Head of caudate nucleus (tissue), 42 donors: ENCODE measurements at regions of chr7 and their contacts with region 1.

Region 1: GRCh38 chr7:30504347-30505173 is at the start of gene GGCT:
- DNase-seq: peak; percentile 97 to 100 (median 99)

Region 2: GRCh38 chr7:30164567-30164966 is 340.0 kb before region 1 on chr7:
- intact Hi-C with region 1: loop called (anchors 10 kb)
- DNase-seq: peak in 17 of 42 donors; percentile 30 to 76 (median 51)

Region 3: DNA sequence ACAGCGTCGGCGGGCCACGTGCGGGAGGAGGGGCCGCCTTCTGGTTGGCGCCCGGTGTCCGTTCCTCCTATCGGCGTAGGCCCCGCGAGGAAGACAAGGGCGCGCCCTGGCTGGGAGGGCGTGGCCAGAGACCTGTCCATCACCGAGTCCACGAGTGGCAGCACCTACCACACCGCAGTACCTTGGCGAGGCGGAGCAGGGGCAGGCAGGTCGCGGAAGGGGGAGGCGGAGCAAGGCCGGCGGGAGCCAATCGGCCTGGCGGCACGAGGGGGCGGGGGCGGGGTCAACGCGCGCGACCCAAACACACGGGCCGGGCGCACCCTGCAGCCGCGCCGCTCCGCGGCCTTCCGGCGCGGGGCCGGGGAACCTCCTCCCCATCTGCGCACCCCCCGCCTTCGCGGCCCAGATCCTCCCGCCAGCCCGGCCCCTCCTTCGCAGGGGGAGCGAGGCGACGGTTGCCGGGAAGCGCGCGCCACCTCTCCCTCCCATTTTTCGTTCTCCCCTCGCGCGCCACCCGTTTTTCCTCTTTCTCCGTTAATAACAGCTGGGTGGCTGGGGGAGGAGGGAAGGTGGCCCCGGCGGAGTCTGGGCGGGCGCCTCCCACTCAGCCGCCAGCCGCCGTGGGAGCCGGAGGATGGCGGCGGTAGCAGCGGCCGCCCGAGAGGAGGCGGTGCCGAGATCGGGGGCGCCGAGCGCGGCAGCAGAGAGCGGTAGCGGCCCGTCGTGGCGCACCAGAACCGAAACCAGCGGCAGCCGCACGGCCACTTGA is 220.1 kb before region 1 on chr7 and contains the start of gene ZNRF2:
- intact Hi-C with region 1: loop called (anchors 10 kb)
- DNase-seq: peak; percentile 85 to 99 (median 95)

Region 4: DNA sequence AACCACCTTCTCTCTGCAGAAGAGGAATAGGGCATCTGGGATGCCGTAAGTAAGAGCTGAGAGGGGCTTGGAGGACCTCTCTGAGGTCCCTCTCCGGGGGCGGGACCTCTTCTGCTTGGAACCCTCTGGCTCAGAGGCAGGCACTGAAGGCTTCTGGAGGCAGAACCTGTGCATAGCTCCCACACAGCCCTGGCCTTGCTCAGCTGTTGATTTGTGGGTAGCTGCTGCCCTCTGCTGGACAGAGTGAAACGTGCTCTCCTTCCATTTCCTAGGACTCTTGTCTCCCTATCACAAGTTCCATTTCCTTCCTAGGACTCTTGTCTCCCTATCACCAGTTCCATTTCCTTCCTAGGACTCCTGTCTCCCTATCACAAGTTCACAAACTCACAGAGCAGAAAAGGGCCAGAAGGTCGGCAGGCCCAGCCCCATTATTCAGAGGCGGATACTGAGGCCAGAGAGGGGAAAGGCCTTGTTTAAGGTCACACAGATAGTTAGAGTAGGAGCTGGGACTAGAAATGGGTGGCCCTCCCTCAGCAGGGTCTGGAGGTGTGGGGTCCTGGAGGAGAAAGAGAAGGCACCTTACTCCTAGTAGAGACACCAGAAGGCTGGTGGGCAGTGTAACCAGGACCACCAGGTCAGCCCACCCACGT is 59.8 kb after region 1 on chr7:
- intact Hi-C with region 1: loop called (anchors 10 kb)
- DNase-seq: peak; percentile 74 to 95 (median 90)

Region 5: GRCh38 chr7:30612658-30613265 is 108.2 kb after region 1 on chr7:
- intact Hi-C with region 1: no loop called
- DNase-seq: no peak

Region 6: GRCh38 chr7:30896783-30897637 is 392.4 kb after region 1 on chr7:
- intact Hi-C with region 1: no loop called
- DNase-seq: no peak